Stomach (tissue), 19 donors: ENCODE measurements at regions of chr4 and their contacts with region 1.

Region 1: DNA sequence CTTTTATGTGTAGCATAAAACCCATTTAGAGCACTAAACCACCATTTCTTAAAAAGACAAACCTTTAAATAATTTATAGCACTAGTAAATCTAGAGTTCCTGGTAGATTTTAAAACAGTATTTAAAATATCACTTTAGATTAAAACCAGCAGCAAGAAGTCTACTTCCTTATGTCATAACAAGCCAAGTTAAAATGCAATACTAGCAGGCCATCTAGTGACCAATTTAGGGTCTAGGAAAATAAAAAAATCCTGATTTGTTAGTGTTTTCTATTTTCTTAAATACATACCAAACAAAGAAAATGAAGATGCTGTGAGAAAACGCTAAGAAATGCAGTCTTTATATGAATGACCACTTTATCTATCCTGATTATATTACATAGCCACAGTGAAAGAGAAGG is 53.9 kb downstream of the PAPSS1 start:
- DNase-seq: peak in 1 of 2 donors; percentile 57
- H3K4me3 ChIP-seq: no peak overlapping the region
- H3K27ac ChIP-seq: no peak overlapping the region
- H3K4me1 ChIP-seq: peaks cover 0 to 36% (median 18%) of the 10 kb centered on the region in 4 donors
- H3K27me3 ChIP-seq: no peaks in the 10 kb centered on the region
- CTCF ChIP-seq: peak in 2 of 7 experiments; percentile 25 to 26
- EP300 ChIP-seq: no peak
- POLR2A ChIP-seq: no peak

Region 2: DNA sequence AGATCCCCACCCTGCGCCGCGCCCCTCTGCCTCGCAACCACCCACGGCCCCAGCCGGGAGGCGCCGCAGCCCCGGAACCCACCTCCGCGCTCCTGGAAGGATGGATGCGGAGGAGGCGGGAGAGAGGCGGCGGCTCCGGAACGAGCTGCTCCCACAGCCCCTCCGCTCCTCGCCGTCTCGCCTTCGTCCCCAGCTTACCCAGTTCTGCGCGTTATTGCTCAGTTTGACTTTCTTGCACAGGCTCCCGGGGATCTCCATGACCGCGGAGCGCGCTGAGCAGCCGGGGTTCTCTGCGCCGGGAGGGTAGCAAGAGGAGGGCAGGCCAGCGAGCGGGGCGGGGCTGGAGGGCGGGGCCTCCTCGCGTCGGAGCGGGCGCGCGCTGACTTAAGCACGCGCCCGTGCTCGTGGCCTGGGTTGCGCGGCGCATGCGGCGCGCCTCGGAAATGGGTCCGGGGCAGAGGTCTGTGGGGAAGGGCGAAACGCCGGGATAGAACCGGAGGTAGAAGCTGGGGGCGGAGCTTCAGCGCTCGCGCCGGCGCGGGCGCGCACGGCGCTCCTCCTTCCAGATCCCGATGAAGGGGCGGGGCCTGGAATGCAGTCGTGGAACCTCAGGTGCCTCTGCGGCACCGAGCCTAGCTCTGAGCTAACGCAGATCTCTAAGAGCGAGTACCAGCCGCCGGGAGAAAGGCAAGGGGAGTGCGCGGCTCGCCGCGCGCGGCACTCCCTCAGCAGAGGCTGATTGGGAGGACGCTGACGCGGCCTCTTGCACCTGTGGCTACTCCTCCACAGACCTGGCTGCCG is 54.0 kb after region 1 on chr4 and contains the start of gene PAPSS1:
- intact Hi-C with region 1: loop called (anchors 10 kb)
- DNase-seq: peak; percentile 99
- H3K4me3 ChIP-seq: peak within 1 kb of the TSS; percentile 95 to 99 (median 96)
- H3K27ac ChIP-seq: peak within 1 kb of the TSS; percentile 84 to 96 (median 95)
- H3K4me1 ChIP-seq: peaks cover 0 to 46% (median 31%) of the 10 kb centered on the region in 4 donors
- H3K27me3 ChIP-seq: no peaks in the 10 kb centered on the region
- CTCF ChIP-seq: no peak
- EP300 ChIP-seq: no peak
- POLR2A ChIP-seq: peak in 2 of 4 donors; percentile 63 to 82
- total RNA-seq, gene PAPSS1: 12.7 to 102 (median 30.8) TPM

Region 3: DNA sequence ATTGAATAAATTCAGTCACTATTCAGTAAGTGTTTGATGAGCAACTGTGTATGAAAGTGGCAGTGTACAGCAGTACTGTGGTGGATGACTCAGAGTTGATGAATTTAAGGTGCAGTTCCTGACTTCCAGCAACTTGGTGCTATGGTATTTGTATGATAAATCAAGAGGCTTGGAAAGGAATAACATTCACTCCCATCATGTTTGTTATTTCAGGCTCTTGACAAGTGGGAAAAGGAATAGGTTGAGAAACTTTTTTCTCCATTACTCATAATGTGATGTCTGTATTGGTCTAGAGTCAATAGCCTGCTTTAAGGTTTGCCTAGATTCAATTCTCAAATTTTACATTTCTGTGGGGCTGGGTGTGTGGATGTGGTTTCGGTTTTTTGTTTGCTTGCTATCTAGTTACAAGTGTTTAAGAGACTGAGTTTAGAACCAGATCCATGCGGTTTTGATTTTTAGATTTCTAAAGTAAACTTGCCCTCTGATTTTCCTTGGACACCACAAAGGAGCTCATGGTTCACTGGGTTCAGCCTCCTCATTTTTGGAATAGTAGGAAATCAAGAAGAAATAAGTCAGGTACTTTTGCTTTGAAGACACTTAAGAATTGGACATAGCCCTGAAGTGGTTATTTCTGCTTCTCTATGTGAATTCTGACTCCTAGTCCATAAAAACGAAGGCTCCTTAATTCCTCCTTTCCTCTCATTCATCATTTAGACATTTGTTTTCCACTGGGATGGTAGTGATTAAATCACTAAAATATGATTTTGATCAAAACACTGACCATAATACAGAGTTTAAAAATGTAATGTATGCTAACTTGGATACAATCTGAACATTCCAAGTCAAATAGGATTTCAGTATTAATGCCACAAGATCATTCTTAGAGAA is 230.3 kb after region 1 on chr4:
- intact Hi-C with region 1: no loop called
- DNase-seq: peak in 1 of 2 donors; percentile 76
- H3K4me3 ChIP-seq: no peak overlapping the region
- H3K27ac ChIP-seq: peak overlapping the region in 4 of 5 donors; percentile 43 to 79 (median 57)
- H3K4me1 ChIP-seq: peaks cover 5 to 54% (median 34%) of the 10 kb centered on the region in 4 donors
- H3K27me3 ChIP-seq: no peaks in the 10 kb centered on the region
- CTCF ChIP-seq: no peak
- EP300 ChIP-seq: no peak
- POLR2A ChIP-seq: no peak